HEK293 (cell line): ENCODE measurements at regions of chr5 and their contacts with region 1.

Region 1: GRCh38 chr5:149141224-149141956 is at the start of gene ABLIM3:
- H3K4me3 ChIP-seq: peak within 1 kb of the TSS; percentile 60
- H3K27ac ChIP-seq: no peak within 1 kb of the TSS
- H3K4me1 ChIP-seq: no peaks in the 10 kb centered on the region
- CTCF ChIP-seq: peak; percentile 87

Region 2: GRCh38 chr5:149128023-149128875 is 13.1 kb before region 1 on chr5:
- CTCF ChIA-PET with region 1: interaction called, 12 read pairs
- POLR2A ChIA-PET with region 1: no interaction called
- H3K4me3 ChIP-seq: no peak overlapping the region
- H3K27ac ChIP-seq: no peak overlapping the region
- H3K4me1 ChIP-seq: no peaks in the 10 kb centered on the region
- CTCF ChIP-seq: peak; percentile 36; the same call in 1 of the 2 replicates

Region 3: DNA sequence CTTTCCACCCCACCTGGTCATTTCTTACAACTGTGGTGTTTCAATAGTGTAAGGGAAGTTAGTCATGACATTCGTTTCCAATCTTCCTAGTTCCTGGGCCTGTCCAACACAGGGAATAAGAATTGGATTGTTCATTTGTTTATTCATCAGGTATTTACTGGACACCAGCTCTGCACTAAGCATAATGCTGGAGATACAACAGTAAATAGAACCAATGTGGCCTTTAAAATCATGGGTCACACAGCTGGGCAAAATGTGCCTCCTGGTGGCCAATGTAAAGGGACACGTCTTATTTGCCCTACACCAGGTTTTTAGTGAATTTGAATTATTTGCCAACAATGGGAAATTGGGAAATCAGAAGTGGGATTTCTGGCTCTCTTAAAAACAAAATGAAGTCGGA is 10.3 kb after region 1 on chr5:
- CTCF ChIA-PET with region 1: interaction called, 10 read pairs
- POLR2A ChIA-PET with region 1: no interaction called
- H3K4me3 ChIP-seq: no peak overlapping the region
- H3K27ac ChIP-seq: no peak overlapping the region
- H3K4me1 ChIP-seq: no peaks in the 10 kb centered on the region
- CTCF ChIP-seq: no peak

Region 4: GRCh38 chr5:149181732-149182131 is 40.3 kb after region 1 on chr5:
- CTCF ChIA-PET with region 1: interaction called, 11 read pairs
- POLR2A ChIA-PET with region 1: no interaction called
- H3K4me3 ChIP-seq: no peak overlapping the region
- H3K27ac ChIP-seq: no peak overlapping the region
- H3K4me1 ChIP-seq: peaks cover 4% of the 10 kb centered on the region
- CTCF ChIP-seq: no peak

Region 5: GRCh38 chr5:149228618-149229297 is 87.4 kb after region 1 on chr5:
- CTCF ChIA-PET with region 1: interaction called, 12 read pairs
- POLR2A ChIA-PET with region 1: no interaction called
- H3K4me3 ChIP-seq: no peak overlapping the region
- H3K27ac ChIP-seq: no peak overlapping the region
- H3K4me1 ChIP-seq: 0 out of 2 replicates have a peak, but pooled peaks cover 3% of the 10 kb centered on the region
- CTCF ChIP-seq: no peak

Region 6: GRCh38 chr5:149298842-149299404 is 157.5 kb after region 1 on chr5:
- CTCF ChIA-PET with region 1: no interaction called
- POLR2A ChIA-PET with region 1: no interaction called
- H3K4me3 ChIP-seq: no peak overlapping the region
- H3K27ac ChIP-seq: no peak overlapping the region
- H3K4me1 ChIP-seq: no peaks in the 10 kb centered on the region
- CTCF ChIP-seq: no peak